Breast epithelium (tissue), 4 donors: ENCODE measurements at regions of chr3 and their contacts with region 1.

Region 1: GRCh38 chr3:61997101-61997500 is 376.2 kb downstream of the FEZF2 start:
- DNase-seq: no peak
- H3K4me3 ChIP-seq: no peak overlapping the region
- H3K27ac ChIP-seq: no peak overlapping the region
- H3K4me1 ChIP-seq: no peaks in the 10 kb centered on the region
- H3K27me3 ChIP-seq: no peaks in the 10 kb centered on the region
- CTCF ChIP-seq: no peak
- POLR2A ChIP-seq: no peak

Region 2: GRCh38 chr3:60598671-60599070 is 1398.4 kb before region 1 on chr3:
- intact Hi-C with region 1: loop called (anchors 5 kb)
- DNase-seq: no peak
- H3K4me3 ChIP-seq: no peak overlapping the region
- H3K27ac ChIP-seq: no peak overlapping the region
- H3K4me1 ChIP-seq: no peaks in the 10 kb centered on the region
- H3K27me3 ChIP-seq: no peaks in the 10 kb centered on the region
- CTCF ChIP-seq: no peak
- POLR2A ChIP-seq: no peak